Cardiac septum (tissue), 1 donor: ENCODE measurements at regions of chr20 and their contacts with region 1.

Region 1: DNA sequence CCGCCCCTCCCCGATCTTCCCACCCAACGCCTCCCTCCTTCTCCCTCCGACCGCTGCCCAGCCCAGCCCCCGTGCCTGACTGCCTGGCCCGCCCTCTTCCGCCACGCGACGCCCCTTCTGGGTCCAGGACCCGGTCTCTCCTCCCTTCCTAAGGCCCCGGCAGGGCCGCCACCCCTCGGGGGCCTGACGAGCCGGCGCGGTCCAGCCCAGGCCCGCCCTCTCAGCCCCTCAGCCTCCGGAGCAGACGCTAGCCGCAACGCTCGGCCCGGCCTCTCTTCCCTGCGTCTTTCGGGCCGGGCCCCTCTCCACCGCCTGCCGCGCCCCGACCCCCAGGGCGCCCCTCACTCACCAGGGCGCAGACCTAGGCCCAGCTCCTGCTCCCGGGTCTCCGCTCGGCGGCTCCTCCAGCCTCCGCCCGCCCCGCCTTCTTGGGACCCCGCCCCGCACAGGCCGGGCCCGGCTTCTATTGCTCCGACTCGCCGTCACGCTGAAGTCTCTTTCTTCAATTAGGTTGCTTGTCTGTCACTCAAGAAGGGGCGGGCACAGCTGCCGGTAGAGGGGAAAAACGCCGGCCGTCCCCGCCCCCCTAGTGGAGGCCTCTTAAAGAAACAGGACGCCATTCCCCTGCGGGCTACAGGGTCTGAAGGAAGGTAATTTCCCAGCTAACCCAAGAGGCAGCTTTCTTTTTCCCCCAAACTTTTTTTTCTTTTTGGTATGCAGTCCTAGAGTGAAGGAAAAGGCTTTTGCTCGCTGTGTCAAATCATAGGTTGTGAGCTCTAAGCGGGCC is at the start of gene ELMO2:
- DNase-seq: peak; percentile 99
- total RNA-seq, gene ELMO2: 35.0 TPM

Region 2: GRCh38 chr20:46363800-46364634 is 42.4 kb before region 1 on chr20:
- intact Hi-C with region 1: loop called (anchors 2 kb)
- DNase-seq: peak; percentile 93

Region 3: DNA sequence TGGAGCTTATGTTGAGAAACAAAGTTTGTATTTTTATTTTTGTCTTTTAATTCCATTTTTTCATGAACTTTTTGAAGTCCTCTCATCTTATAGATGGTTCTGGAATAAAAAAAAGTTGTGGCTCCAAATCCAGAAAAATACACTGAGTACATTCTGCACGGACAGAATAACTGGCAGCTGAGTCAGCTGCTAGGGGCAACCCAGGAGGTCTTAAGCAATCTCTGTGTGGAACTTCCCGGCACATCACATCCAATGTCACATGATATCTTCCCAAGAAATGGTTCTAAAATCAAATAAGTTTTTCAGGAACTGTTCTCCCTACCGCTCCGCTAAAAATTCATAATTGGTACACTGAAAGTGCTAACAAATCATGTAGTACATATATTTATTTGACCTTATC is 215.1 kb after region 1 on chr20:
- intact Hi-C with region 1: no loop called
- DNase-seq: no peak